Endothelial cell of umbilical vein (primary cell): ENCODE measurements at regions of chr18 and their contacts with region 1.

Region 1: DNA sequence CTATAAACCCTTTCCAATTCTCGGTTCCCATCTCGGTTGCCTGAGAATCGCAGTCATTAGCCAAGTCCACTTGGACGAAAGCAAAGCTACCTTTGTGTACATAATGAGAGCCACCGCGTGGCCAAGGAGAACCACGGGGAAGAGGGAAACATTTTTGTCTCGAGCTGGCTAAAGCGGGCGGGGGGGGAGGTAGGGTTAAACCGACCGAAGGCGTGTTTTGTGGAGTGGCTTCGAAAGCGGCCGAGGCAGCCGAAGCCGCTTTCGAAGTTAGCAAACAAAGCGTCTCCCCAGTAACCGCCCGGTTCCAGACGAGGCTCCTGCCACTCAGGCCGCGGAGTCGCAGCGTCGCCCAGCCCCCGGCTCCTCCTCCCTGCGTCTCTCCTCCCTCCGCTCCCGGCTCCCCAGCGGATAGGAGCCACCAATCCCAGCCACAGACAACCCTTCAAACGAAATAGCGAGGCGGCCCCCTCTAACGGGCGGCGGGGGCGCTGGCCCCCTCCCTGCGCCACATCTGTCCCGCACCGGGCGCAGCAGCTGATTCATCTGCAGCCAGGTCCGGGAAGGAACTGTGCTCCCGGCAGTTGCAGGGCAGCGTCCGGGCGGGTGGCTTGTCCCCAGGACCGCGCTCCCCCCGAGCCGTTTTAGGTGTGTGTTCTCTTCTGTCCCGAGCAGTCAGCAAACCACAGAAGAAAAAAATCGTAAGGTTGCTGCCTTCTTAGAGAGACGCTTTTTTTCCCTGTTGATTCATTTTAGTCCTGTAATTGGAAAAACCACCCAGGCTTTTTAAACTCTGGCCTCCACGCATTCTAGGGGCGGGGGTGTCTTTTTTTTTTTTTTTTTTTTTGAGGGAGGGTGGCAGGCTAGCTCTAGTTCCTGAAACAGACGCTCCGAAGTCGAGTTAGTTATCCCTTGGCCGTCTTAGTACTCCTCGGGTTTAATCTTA is 1.8 kb upstream of the TGIF1 start:
- DNase-seq: peak; percentile 99
- H3K4me3 ChIP-seq: peak overlapping the region; percentile 59 to 90 (median 81)
- H3K27ac ChIP-seq: peak overlapping the region; percentile 99
- H3K4me1 ChIP-seq: peaks cover 21% of the 10 kb centered on the region
- H3K27me3 ChIP-seq: no peaks in the 10 kb centered on the region
- CTCF ChIP-seq: peak in 1 of 2 donors; percentile 13
- POLR2A ChIP-seq: peak; percentile 80

Region 2: DNA sequence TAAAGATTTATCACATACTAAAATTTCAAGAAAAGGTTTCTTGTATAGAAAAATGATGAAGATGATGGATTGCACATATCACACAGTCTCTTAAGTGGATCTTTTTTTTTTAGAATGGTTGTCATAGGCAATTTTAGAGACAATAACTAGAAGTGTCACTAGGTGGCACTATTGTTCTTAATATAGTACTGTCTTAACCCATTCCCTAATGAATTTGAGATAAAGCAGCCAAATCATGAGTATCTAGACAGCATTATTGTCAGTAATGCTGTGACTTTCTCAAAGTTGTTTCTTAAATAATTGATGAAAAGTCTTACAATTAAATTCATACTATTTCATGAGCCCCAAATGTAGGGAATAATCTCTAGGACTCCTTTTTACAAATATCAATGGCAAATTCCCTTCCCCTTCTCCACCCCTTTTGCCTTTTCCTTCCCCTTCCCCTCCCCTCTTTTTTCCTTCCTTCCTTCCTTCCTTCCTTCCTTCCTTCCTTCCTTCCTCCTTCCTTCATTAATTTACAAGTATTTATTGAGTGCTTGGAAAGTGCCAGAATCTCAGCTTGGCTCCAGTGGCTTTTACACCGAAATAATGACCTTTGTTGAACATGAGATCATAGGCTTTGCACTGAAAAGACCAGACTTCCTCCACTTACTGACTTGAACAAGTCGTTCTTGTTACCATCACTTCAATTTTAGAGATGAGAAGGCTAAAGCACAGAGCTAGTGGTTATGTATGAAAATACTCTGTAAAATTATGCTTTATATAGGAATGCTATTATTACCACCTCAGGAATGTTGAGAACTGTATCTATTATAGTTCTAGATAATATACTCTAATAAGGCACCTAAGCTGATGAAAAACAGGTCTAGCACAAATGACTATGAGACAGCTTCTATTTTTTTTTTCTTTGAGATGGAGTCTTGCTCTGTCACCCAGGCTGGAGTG is 166.4 kb before region 1 on chr18:
- CTCF ChIA-PET with region 1: interaction called, 52 read pairs
- POLR2A ChIA-PET with region 1: no interaction called
- dilution Hi-C with region 1: no loop called
- intact Hi-C with region 1: loop called (anchors 1 kb)
- DNase-seq: peak; percentile 91
- H3K4me3 ChIP-seq: no peak overlapping the region
- H3K27ac ChIP-seq: peak overlapping the region; percentile 84
- H3K4me1 ChIP-seq: peaks cover 38% of the 10 kb centered on the region
- H3K27me3 ChIP-seq: no peaks in the 10 kb centered on the region
- CTCF ChIP-seq: peak; percentile 6 to 21
- POLR2A ChIP-seq: no peak

Region 3: GRCh38 chr18:3585656-3586509 is 137.7 kb after region 1 on chr18:
- CTCF ChIA-PET with region 1: interaction called, 61 read pairs
- POLR2A ChIA-PET with region 1: no interaction called
- dilution Hi-C with region 1: no loop called
- intact Hi-C with region 1: loop called (anchors 2 kb)
- DNase-seq: peak; percentile 81
- H3K4me3 ChIP-seq: no peak overlapping the region
- H3K27ac ChIP-seq: no peak overlapping the region
- H3K4me1 ChIP-seq: peaks cover 2% of the 10 kb centered on the region
- H3K27me3 ChIP-seq: no peaks in the 10 kb centered on the region
- CTCF ChIP-seq: peak; percentile 75 to 78
- POLR2A ChIP-seq: no peak

Region 4: DNA sequence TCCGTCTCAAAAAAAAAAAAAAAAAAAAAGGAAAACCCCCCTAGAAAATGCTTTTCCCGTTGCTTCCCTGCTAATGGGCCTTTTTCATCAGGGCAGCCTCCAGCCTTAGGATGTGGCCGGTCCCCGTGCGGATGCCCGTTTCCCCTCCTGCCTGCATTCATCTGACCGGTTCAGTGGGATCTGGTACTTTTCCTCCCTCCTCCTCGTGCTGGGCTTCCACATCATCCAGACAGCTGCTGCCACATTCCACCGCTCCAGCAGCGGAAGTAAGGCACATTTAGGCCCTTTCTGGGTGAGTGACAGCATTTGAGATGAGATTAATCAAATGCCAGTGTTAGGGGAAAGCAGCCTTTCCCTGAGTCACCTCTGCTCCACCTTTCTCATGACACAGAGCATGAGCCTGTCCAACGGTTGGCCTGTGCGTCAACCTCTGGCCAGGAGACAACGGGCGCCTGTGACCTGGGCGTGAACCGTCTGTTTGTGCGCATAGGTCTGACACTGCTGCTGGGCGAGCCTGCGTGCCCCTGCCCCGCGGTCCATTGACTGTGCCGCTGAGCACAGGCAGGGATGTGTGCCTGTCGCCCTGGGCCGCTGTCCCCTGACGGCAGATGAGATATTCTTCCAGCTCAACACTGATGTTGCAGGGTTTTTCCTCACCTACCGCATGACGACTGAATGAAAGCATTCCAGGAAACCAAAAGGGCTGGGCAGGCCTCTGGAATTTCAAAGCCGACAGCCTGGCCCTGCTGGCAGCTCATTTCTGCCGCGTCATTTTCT is 175.8 kb after region 1 on chr18:
- CTCF ChIA-PET with region 1: no interaction called
- POLR2A ChIA-PET with region 1: no interaction called
- dilution Hi-C with region 1: no loop called
- intact Hi-C with region 1: loop called (anchors 1 kb)
- DNase-seq: peak; percentile 84
- H3K4me3 ChIP-seq: peak overlapping the region in 1 of 3 experiments; percentile 21
- H3K27ac ChIP-seq: peak overlapping the region; percentile 89
- H3K4me1 ChIP-seq: peaks cover 31% of the 10 kb centered on the region
- H3K27me3 ChIP-seq: no peaks in the 10 kb centered on the region
- CTCF ChIP-seq: no peak
- POLR2A ChIP-seq: peak; percentile 50

Region 5: GRCh38 chr18:3747176-3747973 is 299.2 kb after region 1 on chr18:
- CTCF ChIA-PET with region 1: no interaction called
- POLR2A ChIA-PET with region 1: no interaction called
- dilution Hi-C with region 1: no loop called
- intact Hi-C with region 1: loop called (anchors 5 kb)
- DNase-seq: peak; percentile 90
- H3K4me3 ChIP-seq: peak overlapping the region in 2 of 3 experiments; percentile 4 to 44
- H3K27ac ChIP-seq: peak overlapping the region; percentile 87
- H3K4me1 ChIP-seq: peaks cover 25% of the 10 kb centered on the region
- H3K27me3 ChIP-seq: no peaks in the 10 kb centered on the region
- CTCF ChIP-seq: no peak
- POLR2A ChIP-seq: no peak